ENCODE measurements at regions of chr15 and their contacts with region 1.

Region 1: GRCh38 chr15:90879408-90880366 is 4.6 kb upstream of the FES start:
- DNase-seq: no peak
- H3K4me3 ChIP-seq: no peak overlapping the region
- H3K4me3 Mint-ChIP-seq: no peak overlapping the region
- H3K27ac ChIP-seq: no peak overlapping the region
- H3K27ac Mint-ChIP-seq: no peak overlapping the region
- H3K4me1 ChIP-seq: peaks cover 12 to 22% of the 10 kb centered on the region in 2 donors
- H3K4me1 Mint-ChIP-seq: peaks cover 14% of the 10 kb centered on the region
- H3K27me3 ChIP-seq: no peaks in the 10 kb centered on the region
- H3K27me3 Mint-ChIP-seq: peaks cover 0 to 2% (median 0%) of the 10 kb centered on the region in 3 donors
- CTCF ChIP-seq: no peak

Region 2: DNA sequence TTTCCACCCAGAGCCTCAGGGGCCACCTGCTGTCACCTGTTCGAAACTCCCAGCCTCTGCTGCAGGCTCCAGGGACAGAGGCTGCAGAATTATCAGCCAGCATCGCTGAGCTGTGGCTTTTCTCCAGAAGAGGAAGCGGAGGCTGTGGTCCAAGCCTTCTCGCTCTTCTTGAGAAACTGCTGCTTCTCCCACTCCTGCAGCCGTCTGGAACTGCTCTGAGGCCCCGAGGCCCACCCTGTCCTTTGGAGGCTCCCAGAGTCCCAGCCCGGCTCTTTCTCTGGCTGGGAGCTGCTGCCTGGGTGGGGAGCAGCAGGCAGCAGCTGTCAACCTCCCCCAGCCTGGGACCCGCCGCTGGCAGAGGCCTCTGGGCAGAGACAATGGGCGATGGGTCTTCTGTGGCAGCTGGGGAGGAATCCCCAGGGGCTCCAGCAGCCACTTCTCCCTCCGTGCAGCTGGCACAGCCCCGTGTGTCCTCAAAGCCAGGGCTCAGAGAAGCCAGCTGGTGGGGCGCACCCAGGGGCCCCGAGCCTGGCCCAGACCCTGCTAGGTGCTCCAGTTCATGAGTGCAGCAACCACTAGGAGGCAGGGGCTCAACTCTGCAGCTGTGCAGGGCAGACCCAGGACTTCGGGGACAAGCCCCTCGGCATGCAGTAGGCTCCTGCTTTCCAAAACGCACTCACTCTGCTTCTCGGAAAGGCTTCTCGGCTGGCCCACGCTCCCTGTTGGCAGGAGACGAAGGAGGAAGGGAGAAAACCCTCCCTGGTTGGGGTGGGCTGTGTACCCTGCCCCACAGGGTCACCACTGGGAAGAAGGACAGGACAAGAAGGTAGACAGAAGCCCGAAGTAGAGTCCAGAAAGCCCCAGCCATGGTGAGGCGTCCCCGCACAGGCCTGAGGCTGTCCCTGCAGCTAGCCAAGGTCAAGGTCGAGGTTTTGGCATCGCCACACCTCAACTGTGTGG is 61.2 kb before region 1 on chr15:
- intact Hi-C with region 1: loop called (anchors 5 to 10 kb)
- DNase-seq: peak; percentile 42 to 68 (median 45)
- H3K4me3 ChIP-seq: peak overlapping the region in 1 of 3 experiments; percentile 66
- H3K4me3 Mint-ChIP-seq: peak overlapping the region; percentile 16 to 64
- H3K27ac ChIP-seq: peak overlapping the region; percentile 2 to 54
- H3K27ac Mint-ChIP-seq: peak overlapping the region in 4 of 7 donors; percentile 60 to 81 (median 72)
- H3K4me1 ChIP-seq: peaks cover 18 to 41% of the 10 kb centered on the region in 2 donors
- H3K4me1 Mint-ChIP-seq: peaks cover 34% of the 10 kb centered on the region
- H3K27me3 ChIP-seq: no peaks in the 10 kb centered on the region
- H3K27me3 Mint-ChIP-seq: peaks cover 0 to 7% (median 4%) of the 10 kb centered on the region in 3 donors
- CTCF ChIP-seq: peak; percentile 60

Region 3: DNA sequence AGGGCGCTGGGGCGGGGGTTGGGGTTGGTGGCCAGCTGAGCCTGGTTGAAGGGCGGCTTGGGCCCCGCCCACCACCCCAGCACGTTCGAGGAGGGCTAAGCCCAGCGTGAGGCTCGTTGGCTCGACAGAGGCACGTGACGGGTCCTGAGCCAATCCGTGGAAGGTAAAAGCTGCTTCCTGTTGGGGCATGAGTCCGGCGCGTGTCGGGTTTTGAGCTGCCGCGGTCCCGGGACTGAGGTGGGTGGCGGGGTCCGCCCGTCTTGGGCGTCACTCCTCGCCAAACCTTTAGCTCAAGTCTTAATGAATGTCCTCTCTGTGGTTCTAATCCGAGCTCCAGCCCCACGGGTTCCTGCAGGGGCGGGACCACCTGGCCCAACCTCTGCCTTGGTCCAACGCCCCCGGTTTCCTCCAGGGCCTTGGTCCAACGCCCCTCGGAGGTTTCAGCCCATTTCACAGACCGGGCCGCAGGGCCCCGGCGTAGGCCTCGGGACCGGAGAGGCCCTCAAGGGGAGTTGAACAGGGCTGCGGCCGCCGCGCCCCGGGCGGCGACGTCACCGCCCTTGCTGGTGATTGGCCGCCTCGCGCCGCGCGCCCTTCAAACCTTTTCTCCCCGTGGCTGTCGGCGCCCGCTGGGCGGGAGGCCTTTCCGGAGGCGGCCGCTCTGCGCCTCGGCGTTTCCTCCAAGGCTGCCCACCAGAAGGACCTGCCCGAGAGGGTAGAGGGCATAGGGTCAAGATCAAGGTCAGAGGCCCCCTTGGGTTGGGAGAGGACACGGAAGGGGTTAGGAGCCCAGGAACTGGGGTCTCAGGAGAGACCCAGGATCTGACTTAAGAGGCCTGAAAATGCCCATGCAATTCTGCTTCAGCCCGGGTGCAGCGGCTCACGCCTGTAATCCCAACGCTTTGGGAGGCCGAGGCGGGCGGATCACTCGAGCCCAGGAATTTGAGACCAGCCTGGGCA is 75.3 kb after region 1 on chr15 and contains the start of gene RCCD1:
- intact Hi-C with region 1: no loop called
- DNase-seq: peak; percentile 93 to 96 (median 93)
- H3K4me3 ChIP-seq: peak within 1 kb of the TSS; percentile 67 to 81 (median 79)
- H3K4me3 Mint-ChIP-seq: peak within 1 kb of the TSS; percentile 81 to 88
- H3K27ac ChIP-seq: peak within 1 kb of the TSS; percentile 79 to 94
- H3K27ac Mint-ChIP-seq: peak within 1 kb of the TSS; percentile 89 to 96 (median 94)
- H3K4me1 ChIP-seq: peaks cover 17 to 30% of the 10 kb centered on the region in 2 donors
- H3K4me1 Mint-ChIP-seq: peaks cover 19% of the 10 kb centered on the region
- H3K27me3 ChIP-seq: no peaks in the 10 kb centered on the region
- H3K27me3 Mint-ChIP-seq: no peaks in the 10 kb centered on the region
- CTCF ChIP-seq: no peak
- polyA plus RNA-seq, gene RCCD1: 1.2 to 2.8 (median 1.5) TPM